HepG2 (cell line): ENCODE measurements at regions of chr1 and their contacts with region 1.

Region 1: DNA sequence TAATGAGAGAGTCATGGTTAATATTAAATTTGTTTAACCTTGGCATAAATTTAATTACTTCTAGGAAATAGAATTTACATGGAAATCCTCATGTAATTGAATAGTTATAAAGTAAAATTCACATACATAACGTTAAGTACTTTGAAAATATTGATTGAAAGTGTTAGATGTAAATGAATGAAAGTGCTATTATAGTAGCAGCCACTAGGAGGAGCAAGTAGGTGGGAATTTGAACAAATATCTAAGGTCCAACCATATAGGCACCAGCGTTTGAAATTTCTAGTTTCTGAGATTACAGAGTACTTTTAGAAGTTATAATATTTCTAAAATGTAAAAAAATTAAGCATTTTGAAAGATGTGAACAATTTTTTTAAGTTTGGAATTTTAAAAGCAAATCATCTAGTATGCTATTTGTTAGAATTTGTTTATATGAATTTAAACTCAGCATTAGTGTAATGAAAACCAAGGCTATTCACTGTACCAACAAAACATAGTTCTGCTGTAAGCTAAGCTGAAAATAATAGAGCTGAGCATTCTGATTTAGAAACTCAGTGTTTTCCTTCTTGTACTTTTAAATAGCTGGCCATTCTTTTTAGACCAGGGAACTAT is 3.3 kb downstream of the B3GALT2 start:
- DNase-seq: peak; percentile 39
- ATAC-seq: peak; percentile 70
- H3K4me3 ChIP-seq: no peak overlapping the region; a peak in 1 of 6 replicates
- H3K27ac ChIP-seq: no peak overlapping the region
- H3K4me1 ChIP-seq: peaks cover 16% of the 10 kb centered on the region
- H3K27me3 ChIP-seq: no peaks in the 10 kb centered on the region
- CTCF ChIP-seq: peak; percentile 64
- EP300 ChIP-seq: no peak
- POLR2A ChIP-seq: no peak
- RAD21 ChIP-seq: no peak

Region 2: GRCh38 chr1:193102662-193103061 is 80.5 kb before region 1 on chr1:
- CTCF ChIA-PET with region 1: no interaction called
- POLR2A ChIA-PET with region 1: no interaction called
- in situ Hi-C with region 1: no loop called
- intact Hi-C with region 1: no loop called
- DNase-seq: peak; percentile 28
- ATAC-seq: no peak
- H3K4me3 ChIP-seq: no peak overlapping the region
- H3K27ac ChIP-seq: no peak overlapping the region
- H3K4me1 ChIP-seq: peaks cover 34% of the 10 kb centered on the region
- H3K27me3 ChIP-seq: no peaks in the 10 kb centered on the region; a peak in 1 of 5 replicates
- CTCF ChIP-seq: no peak
- EP300 ChIP-seq: no peak
- POLR2A ChIP-seq: no peak
- RAD21 ChIP-seq: no peak

Region 3: DNA sequence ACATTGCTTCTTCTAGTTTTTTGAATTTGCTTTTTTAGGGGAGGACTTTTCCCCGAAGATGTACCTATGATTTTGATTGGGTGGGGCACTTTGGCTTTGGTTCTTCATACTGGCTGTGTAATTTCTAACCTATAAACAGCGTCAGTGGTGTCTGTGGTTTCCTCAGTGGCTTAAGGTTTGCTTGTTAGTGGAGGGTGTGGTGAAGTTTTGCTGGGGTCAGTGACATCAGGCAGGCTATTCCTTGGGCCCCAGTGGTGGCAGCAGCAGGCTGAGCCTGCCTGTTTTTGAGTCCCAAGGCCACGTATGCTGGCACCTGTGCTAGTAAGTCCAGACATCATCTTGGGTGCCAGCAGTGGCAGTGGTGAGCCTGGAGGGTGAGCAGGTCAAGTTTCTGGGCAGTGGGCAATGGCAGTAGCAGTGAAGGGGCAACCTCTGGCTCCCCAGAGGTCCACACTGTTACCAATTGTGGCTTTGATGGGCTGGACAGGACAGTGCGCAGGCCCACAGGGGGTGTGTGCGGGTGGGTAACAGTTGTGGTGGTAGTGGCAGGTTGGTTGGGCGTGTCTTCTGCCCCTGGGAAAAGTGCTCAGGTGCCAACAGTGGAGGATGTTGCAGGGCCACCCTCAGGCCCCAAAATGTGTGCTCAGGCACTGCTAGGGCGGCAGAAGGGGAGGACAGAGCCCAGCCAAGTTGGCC is 58.2 kb after region 1 on chr1:
- CTCF ChIA-PET with region 1: no interaction called
- POLR2A ChIA-PET with region 1: no interaction called
- in situ Hi-C with region 1: no loop called
- intact Hi-C with region 1: no loop called
- DNase-seq: no peak
- ATAC-seq: no peak
- H3K4me3 ChIP-seq: no peak overlapping the region
- H3K27ac ChIP-seq: no peak overlapping the region
- H3K4me1 ChIP-seq: no peaks in the 10 kb centered on the region
- H3K27me3 ChIP-seq: no peaks in the 10 kb centered on the region
- CTCF ChIP-seq: no peak
- EP300 ChIP-seq: no peak
- POLR2A ChIP-seq: no peak
- RAD21 ChIP-seq: no peak

Region 4: GRCh38 chr1:193348091-193348768 is 165.1 kb after region 1 on chr1:
- CTCF ChIA-PET with region 1: no interaction called
- POLR2A ChIA-PET with region 1: no interaction called
- in situ Hi-C with region 1: no loop called
- intact Hi-C with region 1: loop called (anchors 10 kb)
- DNase-seq: no peak
- ATAC-seq: no peak
- H3K4me3 ChIP-seq: no peak overlapping the region
- H3K27ac ChIP-seq: no peak overlapping the region
- H3K4me1 ChIP-seq: no peaks in the 10 kb centered on the region
- H3K27me3 ChIP-seq: peaks cover 0 to 6% of the 10 kb centered on the region in 2 experiments; a peak in 1 of 5 replicates
- CTCF ChIP-seq: no peak
- EP300 ChIP-seq: no peak
- POLR2A ChIP-seq: no peak
- RAD21 ChIP-seq: no peak

Region 5: GRCh38 chr1:193392686-193393085 is 209.6 kb after region 1 on chr1:
- CTCF ChIA-PET with region 1: no interaction called
- POLR2A ChIA-PET with region 1: no interaction called
- in situ Hi-C with region 1: no loop called
- intact Hi-C with region 1: loop called (anchors 5 kb)
- DNase-seq: no peak
- ATAC-seq: no peak
- H3K4me3 ChIP-seq: no peak overlapping the region
- H3K27ac ChIP-seq: no peak overlapping the region
- H3K4me1 ChIP-seq: no peaks in the 10 kb centered on the region
- H3K27me3 ChIP-seq: no peaks in the 10 kb centered on the region
- CTCF ChIP-seq: no peak
- EP300 ChIP-seq: no peak
- POLR2A ChIP-seq: no peak
- RAD21 ChIP-seq: no peak

Region 6: GRCh38 chr1:193519922-193520321 is 336.8 kb after region 1 on chr1:
- CTCF ChIA-PET with region 1: interaction called, 14 read pairs
- POLR2A ChIA-PET with region 1: no interaction called
- in situ Hi-C with region 1: no loop called
- intact Hi-C with region 1: loop called (anchors 1 kb)
- DNase-seq: peak; percentile 31
- ATAC-seq: peak; percentile 97
- H3K4me3 ChIP-seq: no peak overlapping the region
- H3K27ac ChIP-seq: no peak overlapping the region
- H3K4me1 ChIP-seq: no peaks in the 10 kb centered on the region
- H3K27me3 ChIP-seq: no peaks in the 10 kb centered on the region
- CTCF ChIP-seq: peak; percentile 65
- EP300 ChIP-seq: no peak
- POLR2A ChIP-seq: no peak
- RAD21 ChIP-seq: no peak

Region 7: DNA sequence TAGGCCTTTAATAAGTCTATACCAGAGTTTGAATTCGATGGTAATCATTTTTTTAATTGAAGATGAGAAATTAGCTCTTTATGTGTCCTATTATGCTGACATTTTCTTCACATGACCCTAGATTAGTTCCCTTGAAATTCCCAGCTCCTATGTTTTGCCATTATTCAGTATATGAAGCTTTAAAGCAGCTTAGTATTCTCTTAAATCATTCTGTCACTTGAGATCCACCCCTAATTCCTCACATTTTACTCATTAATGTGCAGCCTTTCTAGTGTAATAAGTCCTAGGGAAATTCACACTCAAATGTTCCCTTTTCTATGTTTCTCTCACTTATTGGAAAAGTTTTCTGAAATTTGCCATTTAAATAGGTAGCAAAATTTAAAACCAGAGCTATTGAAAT is 707.8 kb after region 1 on chr1:
- CTCF ChIA-PET with region 1: no interaction called
- POLR2A ChIA-PET with region 1: no interaction called
- in situ Hi-C with region 1: no loop called
- intact Hi-C with region 1: no loop called
- DNase-seq: no peak
- ATAC-seq: no peak
- H3K4me3 ChIP-seq: no peak overlapping the region
- H3K27ac ChIP-seq: no peak overlapping the region
- H3K4me1 ChIP-seq: no peaks in the 10 kb centered on the region
- H3K27me3 ChIP-seq: no peaks in the 10 kb centered on the region; a peak in 1 of 5 replicates
- CTCF ChIP-seq: no peak
- EP300 ChIP-seq: no peak
- POLR2A ChIP-seq: no peak
- RAD21 ChIP-seq: no peak